Activated CD4-positive, alpha-beta T cell treated with anti-CD3 and anti-CD28 coated beads, Interleukin-2, amount 10 ng/mL, durations not matched to agents 24 days and 14 days (primary cell): ENCODE measurements at regions of chr12 and their contacts with region 1.

Region 1: GRCh38 chr12:27733052-27733656 is 22.5 kb downstream of the MRPS35 start:
- DNase-seq: peak; percentile 78
- H3K4me3 Mint-ChIP-seq: no peak overlapping the region
- H3K27ac Mint-ChIP-seq: no peak overlapping the region
- H3K4me1 Mint-ChIP-seq: peaks cover 2% of the 10 kb centered on the region
- H3K27me3 Mint-ChIP-seq: no peaks in the 10 kb centered on the region

Region 2: DNA sequence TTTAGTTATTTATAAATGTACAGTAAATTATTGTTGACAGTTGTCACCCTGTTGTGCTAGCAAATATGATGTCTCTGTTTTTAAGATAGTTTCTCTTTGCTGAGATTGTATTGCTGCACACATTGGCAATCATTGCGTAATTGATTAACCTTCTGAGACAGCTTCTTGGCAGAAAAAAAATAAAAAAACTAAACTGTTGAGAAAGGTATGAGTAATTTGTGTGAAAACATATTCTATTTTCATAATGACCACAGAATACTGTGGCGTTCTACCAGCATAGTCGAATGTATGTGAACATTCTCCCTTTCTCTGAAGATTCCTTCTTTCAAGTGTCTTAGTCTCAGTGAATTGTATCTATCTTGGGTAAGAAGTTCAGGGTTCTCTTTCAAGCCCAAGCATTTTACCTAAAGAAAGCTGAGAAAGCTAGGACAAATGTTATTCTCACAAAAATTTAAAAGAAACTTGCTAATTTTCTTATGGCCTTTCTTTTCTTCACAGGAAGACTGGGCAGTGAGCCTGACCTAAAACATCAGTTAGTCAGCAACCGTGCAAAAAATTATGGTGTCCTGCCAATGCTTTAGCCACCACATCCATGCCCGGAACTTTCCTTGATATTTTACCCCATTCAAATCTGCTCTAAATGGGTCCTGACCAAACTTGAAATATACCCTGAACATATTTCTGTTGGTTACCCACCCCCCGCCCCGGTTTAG is 105.9 kb before region 1 on chr12:
- intact Hi-C with region 1: no loop called
- DNase-seq: no peak
- H3K4me3 Mint-ChIP-seq: peak overlapping the region; percentile 28
- H3K27ac Mint-ChIP-seq: peak overlapping the region; percentile 15
- H3K4me1 Mint-ChIP-seq: peaks cover 24% of the 10 kb centered on the region
- H3K27me3 Mint-ChIP-seq: peaks cover 4% of the 10 kb centered on the region

Region 3: DNA sequence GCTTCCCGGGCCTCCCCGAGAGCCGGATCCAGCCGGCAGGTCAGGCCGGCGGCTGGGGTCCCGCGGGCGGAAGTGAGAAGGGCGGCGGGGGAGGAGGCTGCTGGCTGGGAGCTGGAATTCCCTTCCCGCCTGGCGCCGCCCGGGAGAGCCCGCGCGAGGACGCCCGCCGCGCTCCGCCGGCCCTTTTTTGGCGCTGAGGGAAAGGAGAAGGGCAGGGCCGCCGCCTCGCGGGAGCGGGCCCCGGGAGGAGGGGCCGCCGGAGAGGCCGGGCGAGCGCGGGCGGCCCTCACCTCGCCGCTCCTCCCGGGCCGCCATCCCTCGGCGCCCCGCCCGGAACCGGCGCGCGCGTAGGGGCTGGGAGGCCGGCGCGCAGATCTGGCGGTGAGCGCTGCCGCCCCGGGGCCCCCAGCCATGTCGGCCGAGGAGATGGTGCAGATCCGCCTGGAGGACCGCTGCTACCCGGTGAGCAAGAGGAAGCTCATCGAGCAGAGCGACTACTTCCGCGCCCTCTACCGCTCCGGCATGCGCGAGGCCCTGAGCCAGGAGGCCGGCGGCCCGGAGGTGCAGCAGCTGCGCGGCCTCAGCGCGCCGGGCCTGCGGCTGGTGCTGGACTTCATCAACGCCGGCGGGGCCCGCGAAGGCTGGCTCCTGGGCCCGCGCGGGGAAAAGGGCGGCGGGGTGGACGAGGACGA is 46.9 kb after region 1 on chr12 and contains the starts of genes KLHL42 and MANSC4:
- intact Hi-C with region 1: loop called (anchors 5 kb)
- DNase-seq: peak; percentile 91
- H3K4me3 Mint-ChIP-seq: peak within 1 kb of the TSS; percentile 84
- H3K27ac Mint-ChIP-seq: peak within 1 kb of the TSS; percentile 82
- H3K4me1 Mint-ChIP-seq: peaks cover 29% of the 10 kb centered on the region
- H3K27me3 Mint-ChIP-seq: peaks cover 20% of the 10 kb centered on the region
- total RNA-seq, gene KLHL42: 13.6 and 14.5 TPM in 2 replicates
- total RNA-seq, gene MANSC4: not detected in 2 replicates

Region 4: GRCh38 chr12:27906658-27907473 is 173.7 kb after region 1 on chr12:
- intact Hi-C with region 1: no loop called
- DNase-seq: no peak
- H3K4me3 Mint-ChIP-seq: no peak overlapping the region
- H3K27ac Mint-ChIP-seq: no peak overlapping the region
- H3K4me1 Mint-ChIP-seq: no peaks in the 10 kb centered on the region
- H3K27me3 Mint-ChIP-seq: peaks cover 4% of the 10 kb centered on the region

Region 5: DNA sequence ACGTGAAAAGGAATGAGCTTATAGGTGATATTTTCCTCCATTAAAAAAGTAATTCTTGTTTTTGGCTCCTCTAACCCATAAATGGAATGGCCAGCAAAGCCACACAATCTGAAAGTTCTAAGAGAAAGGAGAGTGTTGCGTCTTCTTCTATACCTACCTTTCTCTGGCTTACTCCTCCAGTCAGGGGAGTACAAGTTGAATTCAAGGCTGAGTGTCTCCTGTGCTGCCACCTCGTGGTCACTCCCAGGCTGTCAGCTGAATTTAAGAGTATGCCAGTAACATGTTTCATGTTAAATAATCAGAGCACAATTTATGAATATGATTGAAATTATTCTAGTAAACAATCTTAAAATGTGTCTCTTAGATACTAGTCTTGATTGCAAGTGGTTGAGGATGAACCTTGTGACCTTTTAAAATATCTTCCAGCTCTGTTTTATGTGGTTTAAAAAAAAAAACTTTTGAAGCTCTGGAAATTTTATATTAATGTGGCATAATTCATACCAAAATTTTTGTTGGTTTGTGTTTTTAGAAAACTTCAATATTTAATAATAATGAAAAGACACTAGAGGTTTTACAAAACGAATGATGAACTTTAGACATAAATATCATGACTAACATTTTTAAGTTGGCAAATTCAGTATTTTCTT is 207.7 kb after region 1 on chr12:
- intact Hi-C with region 1: loop called (anchors 1 kb)
- DNase-seq: peak; percentile 88
- H3K4me3 Mint-ChIP-seq: no peak overlapping the region
- H3K27ac Mint-ChIP-seq: no peak overlapping the region
- H3K4me1 Mint-ChIP-seq: no peaks in the 10 kb centered on the region
- H3K27me3 Mint-ChIP-seq: peaks cover 22% of the 10 kb centered on the region

Region 6: DNA sequence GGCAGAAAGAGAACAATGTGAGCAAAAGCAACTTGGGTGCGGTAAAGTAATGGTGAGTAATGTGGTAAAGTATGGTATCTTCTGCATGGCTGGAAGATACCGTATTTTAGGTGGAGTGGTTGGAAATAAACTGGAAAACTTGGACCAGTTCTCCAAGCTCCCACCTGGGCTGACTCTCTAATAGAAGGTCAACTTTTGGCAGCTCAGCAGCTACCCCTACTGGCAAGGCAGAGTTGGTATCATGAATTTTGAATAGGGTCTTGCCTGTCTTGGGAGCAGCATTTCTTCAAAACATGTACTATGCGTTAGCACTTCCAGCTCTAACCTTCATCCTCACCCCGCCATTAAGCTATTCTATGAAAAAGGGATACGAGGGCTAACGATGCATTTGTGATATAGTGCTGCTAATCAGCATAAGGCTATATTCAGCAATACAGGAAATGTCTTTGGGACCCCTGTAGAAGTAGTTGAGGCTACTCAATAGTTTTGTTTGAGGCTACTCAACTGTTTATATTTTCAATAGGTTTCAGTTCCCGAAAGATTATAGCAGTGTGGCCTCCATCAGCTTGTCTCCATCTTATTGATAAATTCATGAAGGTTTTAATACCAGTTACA is 1139.6 kb after region 1 on chr12:
- intact Hi-C with region 1: loop called (anchors 5 kb)
- DNase-seq: peak; percentile 63
- H3K4me3 Mint-ChIP-seq: no peak overlapping the region
- H3K27ac Mint-ChIP-seq: no peak overlapping the region
- H3K4me1 Mint-ChIP-seq: no peaks in the 10 kb centered on the region
- H3K27me3 Mint-ChIP-seq: no peaks in the 10 kb centered on the region